ENCODE measurements at regions of chr9 and their contacts with region 1.

Region 1: DNA sequence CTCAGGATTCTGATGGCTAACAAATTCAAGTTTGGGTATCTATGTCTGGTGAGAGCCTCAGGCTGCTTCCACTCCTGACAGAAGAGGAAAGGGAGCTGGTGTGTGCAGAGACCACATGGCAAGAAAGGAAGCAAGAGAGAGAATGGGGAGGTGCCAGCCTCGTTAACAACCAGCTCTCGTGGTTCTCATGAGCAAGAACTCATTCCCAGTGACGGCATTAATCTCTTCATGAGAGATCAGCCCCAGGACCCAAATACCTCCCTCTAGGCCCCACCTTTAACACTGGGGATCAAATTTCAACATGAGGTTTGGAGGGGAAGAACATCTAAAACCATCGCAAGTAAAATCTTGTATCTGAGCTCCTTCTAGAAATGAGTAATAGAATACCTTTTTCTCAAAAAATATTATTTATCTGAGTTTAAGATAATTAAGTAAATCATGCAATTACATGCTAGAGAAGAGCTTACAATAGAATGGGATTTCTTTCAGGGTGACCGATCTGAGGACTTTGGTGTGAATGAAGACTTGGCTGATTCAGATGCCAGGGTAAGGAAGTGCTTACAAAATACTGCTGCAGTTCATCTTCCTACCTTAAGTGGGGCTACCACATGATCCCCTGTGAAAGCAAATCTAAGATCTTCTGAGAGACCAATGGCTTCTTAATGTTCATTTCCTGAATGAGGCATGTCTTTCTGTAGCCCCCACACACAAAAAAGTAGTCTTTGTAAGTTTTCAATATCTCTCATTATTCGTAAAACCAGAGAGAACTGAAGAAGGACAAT is 11.5 kb downstream of the ANXA1 start:
- DNase-seq: peak; percentile 39
- H3K4me3 ChIP-seq: no peak overlapping the region
- H3K27ac ChIP-seq: 0 out of 2 replicates have a peak overlapping the region, but pooled peaks have one; percentile 12
- H3K4me1 ChIP-seq: peaks cover 4% of the 10 kb centered on the region; the same call in 1 of the 2 replicates
- H3K27me3 ChIP-seq: no peaks in the 10 kb centered on the region

Region 2: GRCh38 chr9:73104921-73105320 is 58.3 kb before region 1 on chr9:
- in situ Hi-C with region 1: loop called (anchors 5 kb)
- DNase-seq: no peak
- H3K4me3 ChIP-seq: no peak overlapping the region
- H3K27ac ChIP-seq: no peak overlapping the region
- H3K4me1 ChIP-seq: no peaks in the 10 kb centered on the region
- H3K27me3 ChIP-seq: no peaks in the 10 kb centered on the region

Region 3: DNA sequence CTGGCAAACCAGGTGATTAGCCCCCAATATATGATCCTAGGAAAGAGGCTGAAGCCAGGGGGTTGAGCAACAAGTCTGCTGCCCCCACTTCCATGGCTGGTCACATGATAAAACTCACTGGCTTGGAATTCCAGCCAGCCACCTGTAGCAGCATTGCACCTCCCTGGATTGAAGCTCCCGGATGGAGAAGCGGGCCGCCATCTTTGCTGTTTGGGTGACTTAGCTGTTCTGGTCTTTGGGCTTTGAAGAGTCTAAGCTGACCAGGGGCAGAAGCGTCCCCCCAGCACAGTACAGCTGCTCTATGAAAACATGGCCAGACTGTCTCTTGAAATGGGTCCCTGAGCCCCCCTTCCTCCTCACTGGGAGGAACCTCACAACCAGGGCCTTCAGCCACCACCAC is 598.7 kb after region 1 on chr9:
- in situ Hi-C with region 1: no loop called
- DNase-seq: no peak
- H3K4me3 ChIP-seq: no peak overlapping the region
- H3K27ac ChIP-seq: no peak overlapping the region
- H3K4me1 ChIP-seq: no peaks in the 10 kb centered on the region
- H3K27me3 ChIP-seq: no peaks in the 10 kb centered on the region

Measured in GM23248 (cell line).